Tibial artery (tissue), 4 donors: ENCODE measurements at regions of chr22 and their contacts with region 1.

Region 1: GRCh38 chr22:36546092-36546804 is 17.3 kb upstream of the EIF3D start:
- DNase-seq: peak in 1 of 2 donors; percentile 32
- H3K4me3 ChIP-seq: no peak overlapping the region
- H3K27ac ChIP-seq: no peak overlapping the region
- H3K4me1 ChIP-seq: no peaks in the 10 kb centered on the region
- H3K27me3 ChIP-seq: peaks cover 0 to 57% of the 10 kb centered on the region in 2 donors
- CTCF ChIP-seq: peak in 1 of 2 experiments; percentile 37

Region 2: GRCh38 chr22:36201630-36202319 is 344.5 kb before region 1 on chr22 and contains the start of gene APOL4:
- intact Hi-C with region 1: no loop called
- DNase-seq: peak; percentile 66 to 78
- H3K4me3 ChIP-seq: peak within 1 kb of the TSS in 1 of 2 donors; percentile 8
- H3K27ac ChIP-seq: no peak within 1 kb of the TSS
- H3K4me1 ChIP-seq: peaks cover 0 to 2% (median 0%) of the 10 kb centered on the region in 4 donors
- H3K27me3 ChIP-seq: peaks cover 0 to 4% of the 10 kb centered on the region in 2 donors
- CTCF ChIP-seq: no peak

Region 3: GRCh38 chr22:36239401-36240171 is 306.7 kb before region 1 on chr22 and contains the start of gene APOL2:
- intact Hi-C with region 1: no loop called
- DNase-seq: peak; percentile 92 to 95
- H3K4me3 ChIP-seq: peak within 1 kb of the TSS; percentile 60
- H3K27ac ChIP-seq: peak within 1 kb of the TSS; percentile 83 to 87
- H3K4me1 ChIP-seq: peaks cover 0 to 53% (median 37%) of the 10 kb centered on the region in 4 donors
- H3K27me3 ChIP-seq: no peaks in the 10 kb centered on the region
- CTCF ChIP-seq: peak; percentile 52 to 69

Region 4: GRCh38 chr22:36762687-36763260 is 216.5 kb after region 1 on chr22:
- intact Hi-C with region 1: loop called (anchors 10 kb)
- DNase-seq: peak in 1 of 2 donors; percentile 65
- H3K4me3 ChIP-seq: no peak overlapping the region
- H3K27ac ChIP-seq: no peak overlapping the region
- H3K4me1 ChIP-seq: no peaks in the 10 kb centered on the region
- H3K27me3 ChIP-seq: no peaks in the 10 kb centered on the region
- CTCF ChIP-seq: no peak